ENCODE measurements at regions of chr2 and their contacts with region 1.

Region 1: DNA sequence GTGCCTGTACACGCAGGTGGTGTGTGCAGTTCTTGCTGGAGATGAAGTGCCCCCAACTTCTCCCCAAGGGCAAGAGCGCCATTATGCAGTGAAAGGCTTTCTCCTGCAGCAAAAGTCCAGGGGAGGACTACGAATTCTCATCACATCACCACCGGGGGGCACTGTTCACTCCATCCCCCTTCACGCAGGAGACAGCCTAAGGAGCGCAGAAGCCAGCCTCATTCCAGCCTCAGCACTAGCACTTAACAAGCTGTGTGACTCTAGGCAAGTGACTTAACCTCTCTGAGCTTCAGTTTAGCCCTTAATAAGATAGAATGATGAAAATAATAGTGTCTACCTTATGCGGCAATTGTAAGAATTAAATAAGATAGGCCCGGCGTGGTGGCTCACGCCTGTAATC is 32.3 kb downstream of the DNMT3A start:
- DNase-seq: peak; percentile 74 to 81 (median 78)
- ATAC-seq: peak; percentile 90
- H3K4me3 ChIP-seq: no peak overlapping the region
- H3K27ac ChIP-seq: no peak overlapping the region
- H3K4me1 ChIP-seq: peaks cover 0 to 26% of the 10 kb centered on the region in 2 experiments; a peak in 2 of 5 replicates
- H3K27me3 ChIP-seq: peaks cover 10 to 50% of the 10 kb centered on the region in 2 experiments; a peak in 4 of 5 replicates
- CTCF ChIP-seq: peak; percentile 66 to 82 (median 68)
- EP300 ChIP-seq: no peak
- POLR2A ChIP-seq: no peak
- RAD21 ChIP-seq: peak; percentile 40 to 72

Region 2: DNA sequence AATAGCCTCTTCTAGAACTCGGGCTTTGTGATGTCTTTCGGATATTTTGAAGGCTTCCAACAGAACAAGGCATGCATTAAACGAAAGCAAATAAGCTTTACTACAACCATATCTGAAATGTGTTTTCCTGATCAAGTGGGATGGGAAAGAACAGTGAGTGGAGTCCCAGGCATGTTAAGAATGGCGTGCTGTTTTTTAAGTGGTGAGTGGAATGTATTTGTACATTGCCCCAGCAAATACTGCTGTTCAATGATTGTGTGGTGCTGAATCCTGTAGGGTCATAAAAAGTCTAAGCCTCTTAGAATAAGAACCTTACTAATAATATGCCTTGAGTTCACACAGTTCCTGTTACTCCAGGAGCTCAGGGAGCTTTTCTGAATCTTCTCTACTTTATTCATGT is 193.5 kb before region 1 on chr2:
- CTCF ChIA-PET with region 1: no interaction called
- POLR2A ChIA-PET with region 1: no interaction called
- in situ Hi-C with region 1: no loop called
- intact Hi-C with region 1: no loop called
- DNase-seq: no peak
- ATAC-seq: no peak
- H3K4me3 ChIP-seq: no peak overlapping the region
- H3K27ac ChIP-seq: no peak overlapping the region
- H3K4me1 ChIP-seq: no peaks in the 10 kb centered on the region
- H3K27me3 ChIP-seq: peaks cover 47 to 79% of the 10 kb centered on the region in 2 experiments
- CTCF ChIP-seq: no peak
- EP300 ChIP-seq: no peak
- POLR2A ChIP-seq: no peak
- RAD21 ChIP-seq: no peak

Region 3: DNA sequence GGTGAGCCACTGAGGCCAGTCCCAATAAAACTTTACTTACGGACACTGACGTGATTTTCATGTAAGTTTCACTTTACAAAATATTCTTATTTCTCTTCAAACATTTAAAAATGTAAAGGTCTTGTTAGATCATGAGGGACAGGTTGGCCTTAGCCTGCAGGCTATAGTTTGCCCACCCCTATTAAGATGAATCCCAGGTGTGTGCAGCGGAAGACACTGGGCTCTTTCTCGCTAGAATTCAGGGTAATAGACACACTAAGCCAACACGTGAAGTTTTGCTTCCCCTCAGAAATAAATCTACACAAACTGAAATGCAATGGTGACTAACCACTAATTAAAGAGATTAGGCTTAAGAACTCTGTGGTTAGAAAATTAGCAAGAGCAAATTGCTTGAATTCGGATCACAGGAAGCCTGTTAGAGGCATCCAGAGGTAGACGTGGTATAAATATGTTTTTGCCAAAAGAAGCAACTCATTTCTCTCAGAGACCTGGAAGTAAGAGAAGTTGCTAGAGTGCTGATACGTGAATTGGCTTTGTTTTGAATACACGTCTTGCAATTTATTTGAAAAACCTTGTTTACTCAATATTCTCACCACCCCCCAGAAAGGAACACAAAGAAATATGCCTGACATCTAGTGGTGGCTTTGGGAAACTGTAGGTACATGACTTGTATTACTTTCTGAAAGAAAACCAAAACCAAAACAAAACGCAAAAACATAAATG is 212.4 kb after region 1 on chr2:
- CTCF ChIA-PET with region 1: interaction called, 3 read pairs
- POLR2A ChIA-PET with region 1: no interaction called
- in situ Hi-C with region 1: no loop called
- intact Hi-C with region 1: loop called (anchors 5 kb)
- DNase-seq: peak; percentile 40 to 60 (median 42)
- ATAC-seq: peak; percentile 94
- H3K4me3 ChIP-seq: no peak overlapping the region
- H3K27ac ChIP-seq: no peak overlapping the region
- H3K4me1 ChIP-seq: no peaks in the 10 kb centered on the region
- H3K27me3 ChIP-seq: peaks cover 5 to 25% of the 10 kb centered on the region in 2 experiments; a peak in 3 of 5 replicates
- CTCF ChIP-seq: peak; percentile 60 to 82 (median 66); a peak in 5 of 6 replicates
- EP300 ChIP-seq: no peak
- POLR2A ChIP-seq: no peak
- RAD21 ChIP-seq: peak; percentile 74 to 81